ENCODE measurements at regions of chr2 and their contacts with region 1.

Region 1: GRCh38 chr2:218876562-218877219 is 4.0 kb upstream of the WNT10A start:
- DNase-seq: peak; percentile 80
- H3K4me3 Mint-ChIP-seq: no peak overlapping the region
- H3K27ac Mint-ChIP-seq: no peak overlapping the region
- H3K4me1 Mint-ChIP-seq: peaks cover 4% of the 10 kb centered on the region
- H3K27me3 Mint-ChIP-seq: peaks cover 19% of the 10 kb centered on the region
- CTCF ChIP-seq: peak; percentile 96

Region 2: DNA sequence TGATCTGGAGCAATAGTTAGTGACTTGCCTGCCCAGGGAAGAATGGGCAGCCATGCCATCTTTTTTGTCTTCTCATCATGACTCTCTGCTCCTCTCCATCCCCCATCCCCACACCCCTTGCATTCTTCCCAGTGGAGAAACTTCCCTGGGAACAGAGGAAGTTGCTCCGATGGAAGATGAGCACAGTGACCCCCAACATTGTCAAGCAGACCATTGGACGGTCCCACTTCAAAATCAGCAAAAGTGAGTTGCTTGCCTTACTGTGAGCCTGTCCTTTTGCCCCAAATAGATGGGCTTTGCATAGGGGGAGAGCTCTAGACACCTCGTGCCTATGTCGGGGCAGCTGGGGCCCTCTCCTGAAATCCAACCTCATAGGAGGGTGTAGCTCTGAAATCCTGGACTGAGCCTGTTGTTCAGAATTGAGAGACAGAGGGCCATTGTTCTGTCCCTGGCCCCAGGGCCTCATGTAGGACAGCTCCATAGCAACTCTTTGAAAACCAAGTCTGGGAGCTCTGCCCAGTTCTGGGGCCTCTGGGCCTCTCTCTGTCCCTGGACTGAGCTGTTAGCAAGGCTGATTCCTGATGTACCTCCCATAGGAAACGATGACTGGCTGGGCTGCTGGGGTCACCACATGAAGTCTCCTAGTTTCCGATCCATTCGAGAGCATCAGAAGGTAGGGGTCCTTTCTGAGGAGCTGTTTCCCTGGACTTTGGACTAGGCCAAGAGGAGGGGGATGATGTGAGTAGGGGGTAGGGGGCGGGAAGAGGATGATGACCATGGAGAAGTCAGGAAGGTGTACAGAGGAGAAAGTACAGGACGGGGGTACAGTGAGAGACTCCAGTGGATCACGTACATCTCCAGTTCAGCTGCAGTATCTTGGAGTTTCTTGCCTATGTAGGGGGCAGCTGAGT is 130.9 kb before region 1 on chr2:
- CTCF ChIA-PET with region 1: no interaction called
- POLR2A ChIA-PET with region 1: no interaction called
- intact Hi-C with region 1: no loop called
- DNase-seq: peak; percentile 8
- H3K4me3 Mint-ChIP-seq: no peak overlapping the region
- H3K27ac Mint-ChIP-seq: peak overlapping the region; percentile 21
- H3K4me1 Mint-ChIP-seq: no peaks in the 10 kb centered on the region
- H3K27me3 Mint-ChIP-seq: no peaks in the 10 kb centered on the region
- CTCF ChIP-seq: no peak

Region 3: DNA sequence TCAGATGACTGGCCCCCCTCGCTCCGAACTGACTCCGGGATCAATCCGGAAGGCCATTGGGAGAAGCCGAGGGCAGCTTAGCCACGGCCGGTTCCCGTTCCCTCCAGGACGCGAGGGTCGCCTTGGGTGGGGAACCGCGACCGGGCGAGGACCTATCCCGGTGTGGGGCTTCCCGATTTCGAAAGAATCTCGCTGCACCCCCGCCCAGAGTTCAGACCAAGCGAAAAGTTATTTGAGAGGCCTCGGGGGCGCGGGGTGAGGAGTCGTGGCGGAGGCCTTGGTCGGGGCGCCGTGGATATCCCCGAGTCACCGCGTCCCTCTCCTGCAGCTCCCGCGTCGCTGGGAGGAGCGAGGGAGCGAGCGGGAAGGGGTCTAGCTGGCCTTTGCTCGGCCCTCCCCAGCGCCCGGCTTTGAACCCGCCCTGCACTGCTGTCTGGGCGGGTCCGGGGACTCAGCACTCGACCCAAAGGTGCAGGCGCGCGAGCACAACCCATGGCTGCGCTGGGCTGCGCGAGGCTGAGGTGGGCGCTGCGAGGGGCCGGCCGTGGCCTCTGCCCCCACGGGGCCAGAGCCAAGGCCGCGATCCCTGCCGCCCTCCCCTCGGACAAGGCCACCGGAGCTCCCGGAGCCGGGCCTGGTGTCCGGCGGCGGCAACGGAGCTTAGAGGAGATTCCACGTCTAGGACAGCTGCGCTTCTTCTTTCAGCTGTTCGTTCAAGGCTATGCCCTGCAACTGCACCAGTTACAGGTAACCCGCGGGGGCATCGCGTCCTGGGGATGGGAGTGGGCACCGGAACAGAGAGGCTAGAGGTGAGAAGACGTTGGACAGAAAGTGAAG is 94.8 kb before region 1 on chr2 and contains the start of gene CYP27A1:
- CTCF ChIA-PET with region 1: no interaction called
- POLR2A ChIA-PET with region 1: no interaction called
- intact Hi-C with region 1: no loop called
- DNase-seq: no peak
- H3K4me3 Mint-ChIP-seq: no peak within 1 kb of the TSS
- H3K27ac Mint-ChIP-seq: no peak within 1 kb of the TSS
- H3K4me1 Mint-ChIP-seq: no peaks in the 10 kb centered on the region
- H3K27me3 Mint-ChIP-seq: no peaks in the 10 kb centered on the region
- CTCF ChIP-seq: no peak
- total RNA-seq, gene CYP27A1: 0.12 TPM in 1 of 2 replicates, not detected in the other

Region 4: DNA sequence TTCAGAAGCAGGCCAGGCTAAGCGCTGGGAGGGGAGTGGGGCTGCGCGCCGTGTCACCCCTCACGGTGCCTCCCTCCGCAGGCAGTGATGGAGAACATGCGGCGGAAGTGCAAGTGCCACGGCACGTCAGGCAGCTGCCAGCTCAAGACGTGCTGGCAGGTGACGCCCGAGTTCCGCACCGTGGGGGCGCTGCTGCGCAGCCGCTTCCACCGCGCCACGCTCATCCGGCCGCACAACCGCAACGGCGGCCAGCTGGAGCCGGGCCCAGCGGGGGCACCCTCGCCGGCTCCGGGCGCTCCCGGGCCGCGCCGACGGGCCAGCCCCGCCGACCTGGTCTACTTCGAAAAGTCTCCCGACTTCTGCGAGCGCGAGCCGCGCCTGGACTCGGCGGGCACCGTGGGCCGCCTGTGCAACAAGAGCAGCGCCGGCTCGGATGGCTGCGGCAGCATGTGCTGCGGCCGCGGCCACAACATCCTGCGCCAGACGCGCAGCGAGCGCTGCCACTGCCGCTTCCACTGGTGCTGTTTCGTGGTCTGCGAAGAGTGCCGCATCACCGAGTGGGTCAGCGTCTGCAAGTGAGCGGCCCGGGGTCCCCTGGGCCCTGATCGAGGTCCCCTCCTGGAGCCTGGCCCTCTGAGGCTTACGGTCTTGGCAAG is 16.1 kb after region 1 on chr2:
- CTCF ChIA-PET with region 1: interaction called, 839 read pairs
- POLR2A ChIA-PET with region 1: interaction called, 237 read pairs
- intact Hi-C with region 1: loop called (anchors 1 kb)
- DNase-seq: peak; percentile 67
- H3K4me3 Mint-ChIP-seq: peak overlapping the region; percentile 67
- H3K27ac Mint-ChIP-seq: no peak overlapping the region
- H3K4me1 Mint-ChIP-seq: peaks cover 34% of the 10 kb centered on the region
- H3K27me3 Mint-ChIP-seq: no peaks in the 10 kb centered on the region
- CTCF ChIP-seq: peak; percentile 50

Region 5: DNA sequence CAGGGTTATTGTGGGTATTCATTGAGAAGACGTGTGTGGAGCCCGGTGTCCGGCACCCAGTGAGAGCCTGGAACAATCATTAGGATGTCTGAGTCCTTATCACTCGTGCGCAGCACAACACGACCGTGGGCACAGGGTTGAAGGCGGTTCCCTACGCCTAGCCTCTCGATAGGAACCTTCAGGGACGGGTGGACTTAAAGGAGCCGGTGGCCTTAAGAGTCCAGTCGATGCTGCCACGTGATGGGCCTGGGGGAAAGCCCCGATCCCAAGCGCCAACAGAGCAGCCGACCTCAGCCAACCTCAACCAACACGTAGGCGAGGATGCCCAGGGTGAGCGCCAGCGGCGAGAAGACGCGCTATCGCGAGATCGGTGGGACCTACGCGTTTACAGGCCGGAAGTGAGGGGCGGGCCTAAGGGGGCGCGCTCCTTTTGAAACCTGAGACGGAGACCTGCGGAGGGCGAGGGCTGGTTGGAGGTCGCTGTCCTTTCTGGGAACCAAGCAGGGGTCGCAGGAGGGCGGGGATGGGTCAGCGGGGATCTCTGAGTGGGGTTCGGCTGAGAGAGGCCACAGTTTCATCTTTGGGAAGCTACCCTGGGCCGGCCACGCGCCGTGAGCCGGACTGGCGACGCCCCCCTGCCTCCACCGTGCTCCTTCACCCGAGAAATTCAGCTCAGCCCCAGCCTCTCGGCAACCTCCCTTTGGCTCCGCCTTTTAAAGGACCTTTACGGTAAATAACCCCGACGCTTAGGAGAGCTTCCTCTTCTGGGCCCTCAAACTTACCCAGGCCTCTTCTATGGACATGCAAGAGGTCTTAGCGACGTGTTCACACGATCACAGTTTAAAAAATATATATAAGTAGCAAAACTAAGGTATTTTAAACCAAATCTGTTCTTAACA is 32.3 kb after region 1 on chr2:
- CTCF ChIA-PET with region 1: interaction called, 839 read pairs
- POLR2A ChIA-PET with region 1: no interaction called
- intact Hi-C with region 1: no loop called
- DNase-seq: peak; percentile 87
- H3K4me3 Mint-ChIP-seq: peak overlapping the region; percentile 76
- H3K27ac Mint-ChIP-seq: peak overlapping the region; percentile 35
- H3K4me1 Mint-ChIP-seq: peaks cover 6% of the 10 kb centered on the region
- H3K27me3 Mint-ChIP-seq: peaks cover 26% of the 10 kb centered on the region
- CTCF ChIP-seq: no peak

Region 6: GRCh38 chr2:218944759-218945404 is 68.2 kb after region 1 on chr2:
- CTCF ChIA-PET with region 1: interaction called, 10 read pairs
- POLR2A ChIA-PET with region 1: no interaction called
- intact Hi-C with region 1: no loop called
- DNase-seq: no peak
- H3K4me3 Mint-ChIP-seq: no peak overlapping the region
- H3K27ac Mint-ChIP-seq: no peak overlapping the region
- H3K4me1 Mint-ChIP-seq: no peaks in the 10 kb centered on the region
- H3K27me3 Mint-ChIP-seq: peaks cover 56% of the 10 kb centered on the region
- CTCF ChIP-seq: no peak

Region 7: DNA sequence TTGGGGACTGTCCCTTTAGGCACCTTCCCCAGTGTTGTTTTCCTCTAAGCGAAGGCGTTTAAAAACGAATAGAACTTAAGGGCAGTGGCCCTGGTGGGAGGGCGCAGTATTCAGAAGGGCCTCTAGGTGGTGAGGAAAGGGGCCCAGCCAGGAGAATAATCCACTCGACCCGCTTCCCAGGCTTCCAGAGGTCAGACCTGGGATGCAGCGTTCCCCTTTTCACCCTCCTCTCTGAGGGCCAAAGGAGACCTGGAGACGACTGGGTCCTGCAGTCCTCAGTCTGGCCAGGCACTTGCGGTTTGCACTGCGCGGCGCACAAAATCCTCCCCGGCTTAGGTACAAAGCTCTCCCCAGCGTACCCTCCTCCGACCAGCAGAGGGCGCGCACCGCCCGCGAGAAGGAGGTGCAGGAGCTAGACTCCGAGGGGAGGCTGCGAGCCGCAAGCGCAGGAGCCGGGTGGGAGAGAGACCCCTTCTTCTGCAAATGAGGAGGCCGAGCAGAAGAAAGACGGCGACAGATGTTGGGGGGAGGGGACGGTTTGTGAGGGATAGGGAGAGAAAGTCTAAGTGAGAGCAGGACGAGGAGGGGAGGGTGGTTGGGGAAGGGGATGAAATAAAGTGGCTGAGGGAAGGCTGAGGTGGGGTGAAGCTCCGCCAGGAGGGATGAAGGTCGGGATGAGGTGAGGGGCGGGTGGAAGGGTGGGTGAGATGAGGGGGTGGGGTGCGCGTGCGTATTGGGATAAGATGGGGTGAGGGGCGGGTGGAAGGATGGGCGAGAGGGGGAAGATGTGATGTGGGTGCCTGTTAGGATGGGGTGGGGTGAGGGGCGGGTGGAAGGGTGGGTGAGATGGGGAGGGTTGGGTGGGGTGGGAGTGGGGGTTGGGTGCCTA is 103.4 kb after region 1 on chr2:
- CTCF ChIA-PET with region 1: interaction called, 12 read pairs
- POLR2A ChIA-PET with region 1: no interaction called
- intact Hi-C with region 1: loop called (anchors 5 kb)
- DNase-seq: peak; percentile 78
- H3K4me3 Mint-ChIP-seq: peak overlapping the region; percentile 56
- H3K27ac Mint-ChIP-seq: no peak overlapping the region
- H3K4me1 Mint-ChIP-seq: peaks cover 15% of the 10 kb centered on the region
- H3K27me3 Mint-ChIP-seq: peaks cover 90% of the 10 kb centered on the region
- CTCF ChIP-seq: peak; percentile 89